Endothelial cell of umbilical vein (primary cell): ENCODE measurements at regions of chr2 and their contacts with region 1.

Region 1: DNA sequence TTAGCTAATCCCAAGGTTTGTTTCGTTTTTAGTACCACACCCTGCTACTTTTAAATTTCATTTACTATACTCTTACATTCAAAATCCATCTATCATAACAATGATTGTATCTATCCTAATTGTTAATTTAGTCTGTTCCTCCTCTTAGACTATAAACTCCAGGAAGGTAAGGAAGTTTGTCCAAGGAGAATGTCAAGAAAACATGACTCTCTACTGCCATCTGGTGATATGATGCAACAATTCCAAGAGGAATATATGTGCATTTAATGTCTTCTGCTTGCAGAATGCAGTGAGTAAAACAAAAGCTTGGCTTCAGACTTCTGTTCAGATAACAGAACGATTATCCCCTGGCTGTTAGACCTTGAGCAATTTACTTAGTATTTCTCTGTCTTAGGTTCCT is 1267.1 kb downstream of the LRP1B start:
- DNase-seq: peak; percentile 63
- H3K4me3 ChIP-seq: no peak overlapping the region
- H3K27ac ChIP-seq: no peak overlapping the region
- H3K4me1 ChIP-seq: no peaks in the 10 kb centered on the region
- H3K27me3 ChIP-seq: no peaks in the 10 kb centered on the region
- CTCF ChIP-seq: peak; percentile 24 to 41
- POLR2A ChIP-seq: no peak

Region 2: GRCh38 chr2:139790807-139791752 is 1072.6 kb before region 1 on chr2:
- CTCF ChIA-PET with region 1: interaction called, 13 read pairs
- POLR2A ChIA-PET with region 1: no interaction called
- dilution Hi-C with region 1: no loop called
- intact Hi-C with region 1: loop called (anchors 1 kb)
- DNase-seq: peak; percentile 45
- H3K4me3 ChIP-seq: no peak overlapping the region
- H3K27ac ChIP-seq: no peak overlapping the region
- H3K4me1 ChIP-seq: no peaks in the 10 kb centered on the region
- H3K27me3 ChIP-seq: no peaks in the 10 kb centered on the region
- CTCF ChIP-seq: no peak
- POLR2A ChIP-seq: no peak

Region 3: GRCh38 chr2:140178234-140178633 is 685.5 kb before region 1 on chr2:
- CTCF ChIA-PET with region 1: no interaction called
- POLR2A ChIA-PET with region 1: no interaction called
- dilution Hi-C with region 1: no loop called
- intact Hi-C with region 1: loop called (anchors 10 kb)
- DNase-seq: no peak
- H3K4me3 ChIP-seq: no peak overlapping the region
- H3K27ac ChIP-seq: no peak overlapping the region
- H3K4me1 ChIP-seq: no peaks in the 10 kb centered on the region
- H3K27me3 ChIP-seq: no peaks in the 10 kb centered on the region
- CTCF ChIP-seq: no peak
- POLR2A ChIP-seq: no peak

Region 4: DNA sequence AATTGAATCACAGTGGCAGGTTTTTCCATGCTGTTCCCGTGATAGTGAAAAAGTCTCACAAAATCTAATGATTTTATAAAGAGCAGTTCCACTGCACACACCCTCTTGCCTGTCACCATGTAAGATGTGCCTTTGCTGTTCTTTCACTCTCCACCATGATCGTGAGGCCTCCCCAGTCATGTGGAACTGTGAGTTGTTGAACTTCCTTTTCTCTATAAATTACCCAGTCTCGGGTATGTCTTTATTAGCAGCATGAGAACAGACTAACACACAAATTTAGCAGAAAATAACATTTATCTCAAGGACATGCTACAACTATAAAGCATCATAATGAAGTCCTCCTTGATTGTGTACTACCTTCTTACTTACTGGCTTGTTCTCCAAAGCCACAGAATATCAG is 258.9 kb before region 1 on chr2:
- CTCF ChIA-PET with region 1: no interaction called
- POLR2A ChIA-PET with region 1: no interaction called
- dilution Hi-C with region 1: no loop called
- intact Hi-C with region 1: no loop called
- DNase-seq: no peak
- H3K4me3 ChIP-seq: no peak overlapping the region
- H3K27ac ChIP-seq: no peak overlapping the region
- H3K4me1 ChIP-seq: no peaks in the 10 kb centered on the region
- H3K27me3 ChIP-seq: no peaks in the 10 kb centered on the region
- CTCF ChIP-seq: no peak
- POLR2A ChIP-seq: no peak

Region 5: GRCh38 chr2:140851258-140851981 is 12.3 kb before region 1 on chr2:
- CTCF ChIA-PET with region 1: interaction called, 43 read pairs
- POLR2A ChIA-PET with region 1: no interaction called
- dilution Hi-C with region 1: no loop called
- intact Hi-C with region 1: no loop called
- DNase-seq: no peak
- H3K4me3 ChIP-seq: no peak overlapping the region
- H3K27ac ChIP-seq: no peak overlapping the region
- H3K4me1 ChIP-seq: peaks cover 2% of the 10 kb centered on the region
- H3K27me3 ChIP-seq: no peaks in the 10 kb centered on the region
- CTCF ChIP-seq: no peak
- POLR2A ChIP-seq: no peak

Region 6: DNA sequence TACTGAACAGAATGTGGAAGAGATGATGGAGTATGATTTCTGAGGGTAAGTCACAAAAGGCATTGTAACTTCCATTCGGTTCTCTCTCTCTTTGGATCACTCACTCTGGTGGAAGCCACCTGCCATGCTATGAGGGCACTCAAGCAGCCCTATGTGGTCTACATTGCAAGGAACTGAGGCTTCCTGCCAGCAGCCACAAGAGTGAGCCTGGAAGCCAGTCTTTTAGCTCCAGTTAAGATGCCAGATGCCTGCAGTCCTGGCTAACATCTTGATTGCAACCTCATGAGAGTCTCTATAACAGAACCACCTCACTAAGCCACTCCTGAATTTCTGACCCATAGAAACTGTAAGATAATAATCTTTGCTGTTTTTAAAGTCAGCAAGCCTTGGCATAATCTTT is 331.4 kb after region 1 on chr2:
- CTCF ChIA-PET with region 1: no interaction called
- POLR2A ChIA-PET with region 1: no interaction called
- dilution Hi-C with region 1: no loop called
- intact Hi-C with region 1: no loop called
- DNase-seq: no peak
- H3K4me3 ChIP-seq: no peak overlapping the region
- H3K27ac ChIP-seq: no peak overlapping the region
- H3K4me1 ChIP-seq: no peaks in the 10 kb centered on the region
- H3K27me3 ChIP-seq: no peaks in the 10 kb centered on the region
- CTCF ChIP-seq: no peak
- POLR2A ChIP-seq: no peak

Region 7: DNA sequence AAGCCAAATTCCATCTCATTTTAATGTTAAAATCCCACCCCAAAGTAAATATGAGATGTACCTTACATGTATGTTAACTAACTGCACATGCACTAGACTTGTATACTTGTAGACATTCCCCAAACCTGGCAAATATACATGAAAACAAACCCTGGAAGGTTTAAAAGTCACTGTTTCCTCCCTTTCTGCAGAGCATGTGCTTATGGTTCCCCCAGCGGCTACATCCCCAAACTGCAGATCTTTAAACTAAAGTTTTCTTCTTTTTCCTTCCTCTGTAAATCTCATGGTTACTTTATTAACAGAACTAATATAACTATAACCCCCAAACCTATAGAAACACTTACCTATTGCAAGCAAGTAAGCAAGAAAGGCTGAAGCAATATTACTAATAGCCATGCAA is 535.6 kb after region 1 on chr2:
- CTCF ChIA-PET with region 1: interaction called, 10 read pairs
- POLR2A ChIA-PET with region 1: no interaction called
- dilution Hi-C with region 1: no loop called
- intact Hi-C with region 1: no loop called
- DNase-seq: peak; percentile 10
- H3K4me3 ChIP-seq: no peak overlapping the region
- H3K27ac ChIP-seq: no peak overlapping the region
- H3K4me1 ChIP-seq: no peaks in the 10 kb centered on the region
- H3K27me3 ChIP-seq: no peaks in the 10 kb centered on the region
- CTCF ChIP-seq: peak; percentile 22 to 24
- POLR2A ChIP-seq: no peak

Region 8: GRCh38 chr2:142140434-142140845 is 1276.7 kb after region 1 on chr2:
- CTCF ChIA-PET with region 1: interaction called, 23 read pairs
- POLR2A ChIA-PET with region 1: no interaction called
- dilution Hi-C with region 1: no loop called
- intact Hi-C with region 1: no loop called
- DNase-seq: peak; percentile 36
- H3K4me3 ChIP-seq: no peak overlapping the region
- H3K27ac ChIP-seq: no peak overlapping the region
- H3K4me1 ChIP-seq: no peaks in the 10 kb centered on the region
- H3K27me3 ChIP-seq: peaks cover 2 to 7% of the 10 kb centered on the region in 2 experiments
- CTCF ChIP-seq: peak in 1 of 2 donors; percentile 24
- POLR2A ChIP-seq: no peak